Posterior vena cava (tissue), 2 donors: ENCODE measurements at regions of chr9 and their contacts with region 1.

Region 1: GRCh38 chr9:78590068-78590467 is 293.1 kb downstream of the PSAT1 start:
- DNase-seq: no peak

Region 2: GRCh38 chr9:78533500-78533899 is 56.6 kb before region 1 on chr9:
- intact Hi-C with region 1: loop called in 1 of 2 experiments (anchors 2 kb)
- DNase-seq: no peak